Activated B cell treated with CpG ODN at 0.5 μM for 24 hours (primary cell): ENCODE measurements at regions of chr10 and their contacts with region 1.

Region 1: DNA sequence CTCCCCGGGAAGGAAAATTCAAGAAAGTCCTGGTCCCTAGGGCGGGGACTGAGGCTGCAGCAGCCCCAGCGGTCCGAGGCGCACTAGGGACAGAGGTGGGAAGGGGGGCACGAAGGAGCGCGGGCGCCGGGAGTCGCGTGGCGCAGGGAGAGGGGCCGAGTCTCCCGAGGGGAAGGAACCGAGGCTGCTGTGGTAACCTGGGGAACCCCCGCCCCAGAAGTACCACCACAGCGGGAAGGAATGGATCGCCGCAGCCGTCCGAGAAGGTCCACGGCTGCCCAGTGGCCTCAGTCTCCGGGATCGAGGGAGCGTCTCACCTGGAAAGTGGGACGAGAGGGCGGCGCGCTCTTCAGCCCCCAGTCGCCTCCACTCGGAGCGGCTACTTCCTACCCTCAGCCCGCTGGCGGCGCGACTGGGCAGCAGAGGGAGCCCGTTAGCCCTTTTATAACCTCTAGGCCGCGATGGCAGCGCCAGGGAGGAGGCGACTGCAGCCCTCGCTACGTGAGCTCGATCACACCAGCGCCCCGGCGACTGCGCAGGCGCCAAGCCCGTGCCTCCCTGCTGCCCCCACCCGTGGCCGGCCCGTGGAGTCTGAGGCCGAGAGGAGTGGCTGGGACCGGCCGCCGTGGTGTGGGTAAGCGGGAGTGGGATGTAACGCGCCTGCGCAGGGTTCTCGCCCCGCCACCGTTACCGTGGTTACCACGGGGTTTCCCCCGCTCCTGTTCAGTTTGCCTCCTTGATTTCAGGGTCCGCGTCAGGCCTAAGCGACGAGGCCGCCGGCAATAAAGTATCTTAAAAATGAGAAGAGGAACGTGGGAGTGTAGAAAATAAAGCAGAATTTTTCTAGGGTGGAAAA is at the start of gene P4HA1:
- DNase-seq: peak; percentile 95
- ATAC-seq: peak; percentile 92
- H3K4me3 Mint-ChIP-seq: peak within 1 kb of the TSS; percentile 96
- H3K27ac Mint-ChIP-seq: peak within 1 kb of the TSS; percentile 88
- H3K4me1 Mint-ChIP-seq: peaks cover 30% of the 10 kb centered on the region
- H3K27me3 Mint-ChIP-seq: no peaks in the 10 kb centered on the region
- CTCF ChIP-seq: peak; percentile 23
- total RNA-seq, gene P4HA1: 19.8 and 20.5 TPM in 2 replicates

Region 2: GRCh38 chr10:72354478-72355213 is 742.0 kb before region 1 on chr10 and contains the start of gene DNAJB12:
- CTCF ChIA-PET with region 1: no interaction called
- POLR2A ChIA-PET with region 1: interaction called, 20 read pairs
- intact Hi-C with region 1: no loop called
- DNase-seq: peak; percentile 89
- ATAC-seq: peak; percentile 84
- H3K4me3 Mint-ChIP-seq: peak within 1 kb of the TSS; percentile 99
- H3K27ac Mint-ChIP-seq: peak within 1 kb of the TSS; percentile 99
- H3K4me1 Mint-ChIP-seq: peaks cover 35% of the 10 kb centered on the region
- H3K27me3 Mint-ChIP-seq: no peaks in the 10 kb centered on the region
- CTCF ChIP-seq: no peak
- total RNA-seq, gene DNAJB12: 39.0 and 39.9 TPM in 2 replicates

Region 3: DNA sequence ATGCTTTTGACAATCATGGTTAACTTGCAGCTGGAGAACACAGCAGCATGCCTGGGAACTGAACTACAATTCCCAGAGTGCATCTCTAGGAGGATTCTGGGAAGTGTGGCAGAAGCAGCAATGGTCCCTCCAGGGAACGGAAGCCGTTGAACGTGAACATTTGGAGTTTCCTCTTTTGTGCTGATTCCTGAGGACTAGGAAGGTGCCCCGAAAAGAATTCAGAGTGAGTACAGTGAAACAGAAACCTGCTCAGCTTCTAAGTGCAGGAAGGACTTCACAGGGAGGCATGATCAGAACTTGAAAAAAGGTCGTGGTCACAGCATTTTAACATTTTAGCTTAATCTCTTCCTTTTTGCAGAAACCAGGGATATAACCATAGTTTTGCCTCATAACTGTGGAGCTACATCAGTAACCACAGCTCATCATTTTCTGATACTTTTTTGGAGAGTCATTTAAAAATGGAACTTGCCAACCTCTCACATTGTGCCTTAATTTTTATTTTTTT is 13.7 kb after region 1 on chr10 and contains the start of gene NUDT13:
- CTCF ChIA-PET with region 1: interaction called, 24 read pairs
- POLR2A ChIA-PET with region 1: interaction called, 64 read pairs
- intact Hi-C with region 1: loop called (anchors 1 kb)
- DNase-seq: peak; percentile 20
- ATAC-seq: peak; percentile 92
- H3K4me3 Mint-ChIP-seq: peak within 1 kb of the TSS; percentile 90
- H3K27ac Mint-ChIP-seq: peak within 1 kb of the TSS; percentile 89
- H3K4me1 Mint-ChIP-seq: peaks cover 16% of the 10 kb centered on the region
- H3K27me3 Mint-ChIP-seq: no peaks in the 10 kb centered on the region
- CTCF ChIP-seq: no peak
- total RNA-seq, gene NUDT13: 3.5 and 4.6 TPM in 2 replicates

Region 4: DNA sequence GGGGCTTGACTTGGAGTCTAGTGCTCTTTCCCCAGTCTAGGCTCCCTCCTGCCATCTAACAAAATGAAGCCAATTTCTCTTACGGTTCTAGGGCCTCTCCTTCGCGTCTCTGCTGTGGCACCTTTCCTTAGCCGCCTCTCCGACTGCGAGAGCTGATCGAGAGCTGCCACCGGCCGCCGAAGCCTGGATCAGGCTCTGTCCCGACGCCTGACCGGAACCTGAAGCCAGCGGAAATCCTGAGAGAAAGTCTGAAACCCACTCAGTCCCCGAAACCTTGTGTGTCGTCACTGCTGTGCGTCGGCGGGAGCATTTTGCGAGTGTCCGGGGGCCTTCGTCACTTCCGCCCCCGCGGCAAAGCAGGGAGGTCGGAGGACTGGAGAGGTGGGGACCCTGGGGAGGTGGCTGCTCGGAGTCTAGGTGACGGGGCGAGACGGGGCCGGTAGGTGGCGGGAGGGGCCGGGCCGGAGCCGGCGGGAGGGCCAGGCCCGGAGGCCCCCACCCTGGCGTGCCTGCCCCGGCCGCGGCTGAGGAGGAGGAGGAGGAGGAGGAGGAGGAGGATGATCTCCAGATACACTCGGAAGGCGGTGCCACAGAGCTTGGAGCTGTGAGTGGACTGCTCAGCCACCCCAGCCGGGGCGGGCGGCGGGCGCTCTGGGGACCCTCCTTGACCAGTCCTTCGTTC is 71.2 kb after region 1 on chr10 and contains the starts of genes ECD and FAM149B1:
- CTCF ChIA-PET with region 1: interaction called, 14 read pairs
- POLR2A ChIA-PET with region 1: interaction called, 26 read pairs
- intact Hi-C with region 1: loop called (anchors 1 kb)
- DNase-seq: peak; percentile 95
- ATAC-seq: peak; percentile 98
- H3K4me3 Mint-ChIP-seq: peak within 1 kb of the TSS; percentile 100
- H3K27ac Mint-ChIP-seq: peak within 1 kb of the TSS; percentile 99
- H3K4me1 Mint-ChIP-seq: peaks cover 34% of the 10 kb centered on the region
- H3K27me3 Mint-ChIP-seq: no peaks in the 10 kb centered on the region
- CTCF ChIP-seq: no peak
- total RNA-seq, gene ECD: 31.8 and 35.0 TPM in 2 replicates
- total RNA-seq, gene FAM149B1: 11.4 and 16.0 TPM in 2 replicates

Region 5: DNA sequence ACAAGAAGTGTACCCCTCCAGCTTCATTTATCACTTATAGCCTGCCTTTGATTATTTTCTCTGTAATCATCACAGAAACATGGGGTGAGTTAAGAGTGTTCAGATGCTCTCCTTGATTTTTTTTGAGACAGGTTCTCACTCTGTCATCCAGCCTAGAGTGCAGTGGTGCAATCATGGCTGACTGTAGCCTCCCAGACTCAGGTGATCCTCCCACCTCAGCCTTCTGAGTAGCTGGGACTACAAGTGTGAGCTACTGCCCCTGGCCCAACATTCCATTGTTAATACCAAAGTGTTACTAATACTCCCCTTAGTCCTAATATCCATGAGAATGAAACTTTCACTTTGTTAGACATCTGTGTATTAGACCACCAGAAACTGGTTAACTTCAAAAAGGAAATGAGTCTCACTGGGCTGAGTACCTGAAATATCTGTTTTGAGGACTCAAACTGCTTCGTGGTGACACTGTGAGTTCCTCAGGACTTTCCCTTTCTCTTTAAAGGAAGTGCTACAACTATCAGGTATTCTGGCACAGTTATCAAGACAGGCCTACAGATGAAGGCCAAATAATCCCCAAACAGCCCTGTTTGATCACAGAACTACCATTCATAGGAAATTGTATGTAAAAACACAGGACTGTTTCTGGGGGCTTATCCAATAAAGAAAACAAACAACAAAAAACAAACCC is 282.5 kb after region 1 on chr10:
- CTCF ChIA-PET with region 1: no interaction called
- POLR2A ChIA-PET with region 1: no interaction called
- intact Hi-C with region 1: no loop called
- DNase-seq: no peak
- ATAC-seq: no peak
- H3K4me3 Mint-ChIP-seq: no peak overlapping the region
- H3K27ac Mint-ChIP-seq: peak overlapping the region; percentile 53
- H3K4me1 Mint-ChIP-seq: peaks cover 11% of the 10 kb centered on the region
- H3K27me3 Mint-ChIP-seq: no peaks in the 10 kb centered on the region
- CTCF ChIP-seq: no peak

Region 6: GRCh38 chr10:73413528-73414229 is 317.0 kb after region 1 on chr10 and contains the start of gene ANXA7:
- CTCF ChIA-PET with region 1: no interaction called
- POLR2A ChIA-PET with region 1: no interaction called
- intact Hi-C with region 1: loop called (anchors 1 kb)
- DNase-seq: peak; percentile 86
- ATAC-seq: peak; percentile 93
- H3K4me3 Mint-ChIP-seq: peak within 1 kb of the TSS; percentile 92
- H3K27ac Mint-ChIP-seq: peak within 1 kb of the TSS; percentile 86
- H3K4me1 Mint-ChIP-seq: peaks cover 56% of the 10 kb centered on the region
- H3K27me3 Mint-ChIP-seq: no peaks in the 10 kb centered on the region
- CTCF ChIP-seq: no peak
- total RNA-seq, gene ANXA7: 150 TPM in 2 replicates

Region 7: DNA sequence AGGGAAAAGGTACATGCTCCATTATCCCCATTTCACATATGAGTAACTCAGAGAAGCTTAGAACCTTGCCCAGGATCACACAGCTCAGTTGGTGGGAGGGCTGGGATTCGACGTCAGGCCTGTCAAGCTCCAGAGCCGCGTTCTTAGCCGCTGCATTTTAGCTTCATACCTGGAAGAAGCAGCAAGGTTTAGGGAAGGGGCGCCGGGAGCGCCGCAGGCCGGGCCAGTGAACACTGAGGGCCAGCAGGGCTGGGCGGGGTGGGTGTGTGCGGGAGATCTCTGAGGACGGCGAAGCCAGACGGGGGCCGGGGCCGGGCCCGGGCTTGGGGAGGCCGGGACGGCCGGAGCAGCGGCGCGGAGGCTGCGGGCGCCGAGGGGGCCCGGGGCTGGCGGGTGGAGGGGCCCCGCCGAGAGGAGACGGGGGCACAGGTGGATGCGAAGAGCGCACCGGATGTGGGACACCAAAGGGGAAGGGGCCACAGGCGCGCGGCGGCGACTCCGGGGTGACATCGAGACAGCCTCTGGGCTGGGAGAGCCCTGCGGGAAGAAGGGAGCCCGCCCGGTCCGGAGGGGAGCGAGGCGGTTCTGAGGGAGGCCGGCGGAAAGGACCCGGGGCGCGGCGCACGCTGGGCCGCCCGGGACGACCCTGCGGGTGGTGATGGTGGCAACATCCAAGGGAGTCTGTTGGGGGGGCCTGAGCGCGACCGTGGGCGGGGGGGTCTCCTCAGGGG is 714.2 kb after region 1 on chr10:
- CTCF ChIA-PET with region 1: no interaction called
- POLR2A ChIA-PET with region 1: interaction called, 19 read pairs
- intact Hi-C with region 1: no loop called
- DNase-seq: no peak
- ATAC-seq: peak; percentile 9
- H3K4me3 Mint-ChIP-seq: peak overlapping the region; percentile 87
- H3K27ac Mint-ChIP-seq: peak overlapping the region; percentile 83
- H3K4me1 Mint-ChIP-seq: peaks cover 31% of the 10 kb centered on the region
- H3K27me3 Mint-ChIP-seq: no peaks in the 10 kb centered on the region
- CTCF ChIP-seq: no peak

Region 8: DNA sequence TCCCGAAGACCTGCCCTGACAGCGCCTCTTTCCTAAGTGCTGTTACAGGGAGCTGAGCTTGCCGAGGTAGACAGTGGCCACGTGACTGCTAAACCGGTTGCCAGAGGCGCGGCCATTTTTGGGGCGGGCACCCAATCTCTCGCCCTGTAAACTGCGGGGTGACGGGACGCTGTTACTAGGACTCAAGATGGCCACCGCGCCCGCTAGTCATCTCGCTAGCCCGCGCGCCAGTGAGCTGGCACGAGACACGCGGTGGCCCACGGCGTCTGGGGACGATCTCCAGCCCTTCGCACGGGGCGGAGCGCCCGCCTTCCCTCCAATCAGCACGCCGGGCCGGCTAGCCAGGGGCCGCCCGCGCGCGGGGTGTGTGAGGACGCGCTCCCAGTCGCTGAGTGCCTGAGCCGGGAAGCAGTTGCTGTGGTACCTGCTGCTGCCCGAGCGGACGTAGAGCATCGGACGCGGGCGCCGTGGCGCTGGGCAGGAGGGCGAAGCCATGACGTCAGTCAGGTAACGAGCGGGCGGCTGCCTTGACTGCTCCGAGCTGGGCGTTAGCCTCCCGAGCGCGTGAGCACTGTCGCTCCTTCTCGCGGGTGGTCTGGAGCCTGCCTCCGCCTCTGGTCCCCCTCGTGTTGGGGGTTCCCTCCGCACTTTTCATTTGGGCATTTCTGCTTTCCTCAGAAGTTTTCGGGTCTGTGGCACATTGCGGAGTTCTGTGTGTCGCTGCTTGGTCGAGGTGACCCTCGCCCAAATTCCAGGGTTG is 1079.9 kb after region 1 on chr10:
- CTCF ChIA-PET with region 1: no interaction called
- POLR2A ChIA-PET with region 1: no interaction called
- intact Hi-C with region 1: no loop called
- DNase-seq: peak; percentile 92
- ATAC-seq: peak; percentile 90
- H3K4me3 Mint-ChIP-seq: peak overlapping the region; percentile 92
- H3K27ac Mint-ChIP-seq: peak overlapping the region; percentile 97
- H3K4me1 Mint-ChIP-seq: peaks cover 55% of the 10 kb centered on the region
- H3K27me3 Mint-ChIP-seq: no peaks in the 10 kb centered on the region
- CTCF ChIP-seq: no peak